Activated naive CD4-positive, alpha-beta T cell treated with anti-CD3 and anti-CD28 coated beads for 36 hours (primary cell): ENCODE measurements at regions of chr5 and their contacts with region 1.

Region 1: DNA sequence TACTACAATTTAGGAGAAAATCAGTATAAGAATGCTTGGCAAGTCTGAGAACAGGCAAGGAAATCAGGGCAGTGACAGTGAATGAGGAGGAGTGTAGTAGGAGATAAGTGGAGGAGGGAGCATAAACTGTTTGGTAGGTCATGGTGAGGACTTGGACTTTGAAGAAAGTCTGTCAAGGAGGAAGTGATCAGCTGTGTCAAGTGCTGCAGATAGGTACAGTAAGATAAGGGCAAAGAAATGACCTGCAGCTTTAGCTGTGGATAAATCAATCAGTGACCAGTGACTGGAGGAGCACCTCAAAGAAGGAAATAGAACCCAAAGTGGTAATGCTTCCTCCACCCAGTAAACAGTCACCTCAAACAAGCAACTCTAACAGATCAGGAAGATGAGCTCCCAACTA is 106.3 kb downstream of the RAPGEF6 start:
- DNase-seq: no peak
- H3K4me3 Mint-ChIP-seq: no peak overlapping the region
- H3K27ac Mint-ChIP-seq: peak overlapping the region; percentile 18
- H3K4me1 Mint-ChIP-seq: peaks cover 73% of the 10 kb centered on the region
- H3K27me3 Mint-ChIP-seq: no peaks in the 10 kb centered on the region

Region 2: DNA sequence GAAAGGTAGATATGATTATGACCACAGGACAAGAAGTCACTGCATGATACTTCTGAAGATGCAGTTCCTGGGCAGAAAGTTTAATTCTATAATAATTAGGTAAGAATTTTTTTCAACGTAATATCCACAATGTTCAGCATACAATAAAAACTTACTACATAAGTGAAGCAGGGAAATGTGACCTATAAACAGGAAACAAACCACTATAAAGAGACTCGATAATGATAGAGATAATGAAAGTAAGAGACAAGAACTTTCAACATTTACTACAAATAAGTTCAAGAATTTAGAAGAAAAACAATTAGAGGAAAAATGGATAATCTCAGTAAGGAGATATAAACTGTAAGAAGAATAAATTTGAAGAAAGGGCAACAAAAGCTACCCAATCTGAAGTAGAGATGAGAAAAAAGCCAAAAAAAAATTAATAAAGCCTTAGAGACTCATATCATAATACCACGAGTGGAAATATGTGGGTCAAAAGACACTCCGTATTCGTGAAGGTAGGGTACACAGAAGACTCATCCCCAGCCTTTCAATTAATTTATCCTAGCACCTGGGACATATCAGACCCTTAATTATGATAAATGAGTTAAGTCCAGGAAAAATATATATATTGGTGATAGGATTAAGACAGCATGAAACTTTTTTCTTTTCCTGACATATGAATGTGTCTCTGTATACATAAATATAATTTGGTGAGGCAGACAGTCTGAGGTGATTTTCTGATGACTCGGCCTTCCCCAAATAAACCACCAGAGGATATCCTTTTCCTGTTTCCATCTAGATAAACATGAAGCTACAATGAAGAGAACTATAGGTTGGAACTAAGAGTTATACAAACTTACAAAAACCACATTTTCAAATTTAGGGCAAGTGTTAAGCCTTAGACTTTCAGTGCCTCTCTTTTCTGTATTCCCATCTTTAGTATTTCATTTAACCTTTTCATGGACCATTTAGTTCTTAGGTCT is 14.1 kb before region 1 on chr5:
- CTCF ChIA-PET with region 1: interaction called, 3 read pairs
- intact Hi-C with region 1: loop called (anchors 1 kb)
- DNase-seq: peak; percentile 32
- H3K4me3 Mint-ChIP-seq: peak overlapping the region; percentile 58
- H3K27ac Mint-ChIP-seq: peak overlapping the region; percentile 51
- H3K4me1 Mint-ChIP-seq: peaks cover 57% of the 10 kb centered on the region
- H3K27me3 Mint-ChIP-seq: no peaks in the 10 kb centered on the region

Region 3: DNA sequence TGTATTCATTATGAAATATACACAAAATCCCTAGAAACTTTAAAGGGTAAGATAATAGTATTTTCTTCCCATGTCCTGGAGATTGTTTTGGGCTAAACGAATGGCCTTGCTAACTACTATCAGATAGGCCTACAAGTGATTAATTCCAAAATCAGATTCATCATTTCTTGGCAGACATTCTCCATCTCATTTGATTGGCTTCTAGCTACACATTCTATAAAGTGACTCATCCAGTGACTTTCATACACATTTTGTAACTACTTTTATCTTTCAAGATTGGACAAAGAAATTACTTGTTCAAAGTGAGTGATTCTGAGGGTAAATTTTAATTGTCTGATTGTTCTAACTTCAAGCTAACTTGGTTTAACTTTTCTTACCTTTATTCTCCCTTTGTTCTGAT is 13.1 kb after region 1 on chr5:
- CTCF ChIA-PET with region 1: interaction called, 5 read pairs
- intact Hi-C with region 1: loop called (anchors 1 kb)
- DNase-seq: no peak
- H3K4me3 Mint-ChIP-seq: peak overlapping the region; percentile 20
- H3K27ac Mint-ChIP-seq: peak overlapping the region; percentile 78
- H3K4me1 Mint-ChIP-seq: peaks cover 81% of the 10 kb centered on the region
- H3K27me3 Mint-ChIP-seq: no peaks in the 10 kb centered on the region

Region 4: DNA sequence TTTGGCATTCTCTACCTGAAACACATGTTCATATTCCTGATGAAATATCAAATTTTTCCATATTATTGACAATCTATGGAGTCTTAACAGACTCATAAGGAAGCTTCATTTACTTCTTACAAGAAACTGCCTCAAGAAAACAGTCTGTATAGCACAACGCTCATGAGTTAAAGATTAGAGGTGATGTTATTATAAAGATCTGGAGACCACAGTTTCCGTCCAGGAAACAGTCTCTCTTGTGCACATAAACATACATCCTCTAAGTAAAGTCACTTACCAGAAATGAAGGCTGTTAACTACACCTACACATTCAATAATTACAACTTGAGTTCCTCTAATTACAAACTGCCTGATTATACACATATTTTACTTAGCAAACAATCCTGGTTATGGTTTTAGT is 19.5 kb after region 1 on chr5:
- CTCF ChIA-PET with region 1: interaction called, 5 read pairs
- intact Hi-C with region 1: loop called (anchors 1 kb)
- DNase-seq: no peak
- H3K4me3 Mint-ChIP-seq: peak overlapping the region; percentile 89
- H3K27ac Mint-ChIP-seq: peak overlapping the region; percentile 99
- H3K4me1 Mint-ChIP-seq: peaks cover 72% of the 10 kb centered on the region
- H3K27me3 Mint-ChIP-seq: no peaks in the 10 kb centered on the region

Region 5: GRCh38 chr5:132044207-132044606 is 515.5 kb after region 1 on chr5:
- CTCF ChIA-PET with region 1: no interaction called
- intact Hi-C with region 1: no loop called
- DNase-seq: no peak
- H3K4me3 Mint-ChIP-seq: no peak overlapping the region
- H3K27ac Mint-ChIP-seq: no peak overlapping the region
- H3K4me1 Mint-ChIP-seq: no peaks in the 10 kb centered on the region
- H3K27me3 Mint-ChIP-seq: no peaks in the 10 kb centered on the region